ENCODE measurements at regions of chr3 and their contacts with region 1.

Region 1: GRCh38 chr3:354432-354831 is 157.9 kb downstream of the CHL1 start:
- DNase-seq: peak; percentile 60
- ATAC-seq: peak; percentile 87
- H3K4me3 ChIP-seq: no peak overlapping the region
- H3K27ac ChIP-seq: no peak overlapping the region
- H3K4me1 ChIP-seq: no peaks in the 10 kb centered on the region
- H3K27me3 ChIP-seq: no peaks in the 10 kb centered on the region
- CTCF ChIP-seq: peak; percentile 72 to 84 (median 76)
- EP300 ChIP-seq: no peak
- POLR2A ChIP-seq: no peak
- RAD21 ChIP-seq: peak; percentile 94

Region 2: GRCh38 chr3:54244-54643 is 300.2 kb before region 1 on chr3:
- CTCF ChIA-PET with region 1: interaction called, 415 read pairs
- POLR2A ChIA-PET with region 1: no interaction called
- RAD21 ChIA-PET with region 1: interaction called, 328 read pairs
- SMC1A ChIA-PET with region 1: interaction called, 68 read pairs
- in situ Hi-C with region 1: no loop called
- intact Hi-C with region 1: no loop called
- DNase-seq: no peak
- ATAC-seq: peak; percentile 72
- H3K4me3 ChIP-seq: no peak overlapping the region
- H3K27ac ChIP-seq: no peak overlapping the region
- H3K4me1 ChIP-seq: no peaks in the 10 kb centered on the region
- H3K27me3 ChIP-seq: no peaks in the 10 kb centered on the region
- CTCF ChIP-seq: peak in 1 of 3 experiments; percentile 4; a peak in 1 of 6 replicates
- EP300 ChIP-seq: no peak
- POLR2A ChIP-seq: no peak
- RAD21 ChIP-seq: no peak

Region 3: GRCh38 chr3:118666-119065 is 235.8 kb before region 1 on chr3:
- CTCF ChIA-PET with region 1: interaction called, 11 read pairs
- POLR2A ChIA-PET with region 1: no interaction called
- RAD21 ChIA-PET with region 1: interaction called, 11 read pairs
- SMC1A ChIA-PET with region 1: interaction called, 17 read pairs
- in situ Hi-C with region 1: no loop called
- intact Hi-C with region 1: no loop called
- DNase-seq: no peak
- ATAC-seq: no peak
- H3K4me3 ChIP-seq: no peak overlapping the region
- H3K27ac ChIP-seq: no peak overlapping the region
- H3K4me1 ChIP-seq: no peaks in the 10 kb centered on the region
- H3K27me3 ChIP-seq: no peaks in the 10 kb centered on the region
- CTCF ChIP-seq: no peak
- EP300 ChIP-seq: no peak
- POLR2A ChIP-seq: no peak
- RAD21 ChIP-seq: no peak

Region 4: GRCh38 chr3:184983-185382 is 169.4 kb before region 1 on chr3:
- CTCF ChIA-PET with region 1: interaction called, 15 read pairs
- POLR2A ChIA-PET with region 1: no interaction called
- RAD21 ChIA-PET with region 1: interaction called, 5 read pairs
- SMC1A ChIA-PET with region 1: interaction called, 15 read pairs
- in situ Hi-C with region 1: no loop called
- intact Hi-C with region 1: no loop called
- DNase-seq: no peak
- ATAC-seq: no peak
- H3K4me3 ChIP-seq: no peak overlapping the region
- H3K27ac ChIP-seq: no peak overlapping the region
- H3K4me1 ChIP-seq: no peaks in the 10 kb centered on the region
- H3K27me3 ChIP-seq: no peaks in the 10 kb centered on the region
- CTCF ChIP-seq: no peak
- EP300 ChIP-seq: no peak
- POLR2A ChIP-seq: no peak
- RAD21 ChIP-seq: no peak

Region 5: GRCh38 chr3:260911-261310 is 93.5 kb before region 1 on chr3:
- CTCF ChIA-PET with region 1: interaction called, 3 read pairs
- POLR2A ChIA-PET with region 1: no interaction called
- RAD21 ChIA-PET with region 1: interaction called, 12 read pairs
- SMC1A ChIA-PET with region 1: interaction called, 8 read pairs
- in situ Hi-C with region 1: no loop called
- intact Hi-C with region 1: no loop called
- DNase-seq: no peak
- ATAC-seq: no peak
- H3K4me3 ChIP-seq: no peak overlapping the region
- H3K27ac ChIP-seq: no peak overlapping the region
- H3K4me1 ChIP-seq: no peaks in the 10 kb centered on the region
- H3K27me3 ChIP-seq: no peaks in the 10 kb centered on the region
- CTCF ChIP-seq: no peak
- EP300 ChIP-seq: no peak
- POLR2A ChIP-seq: no peak
- RAD21 ChIP-seq: no peak

Region 6: DNA sequence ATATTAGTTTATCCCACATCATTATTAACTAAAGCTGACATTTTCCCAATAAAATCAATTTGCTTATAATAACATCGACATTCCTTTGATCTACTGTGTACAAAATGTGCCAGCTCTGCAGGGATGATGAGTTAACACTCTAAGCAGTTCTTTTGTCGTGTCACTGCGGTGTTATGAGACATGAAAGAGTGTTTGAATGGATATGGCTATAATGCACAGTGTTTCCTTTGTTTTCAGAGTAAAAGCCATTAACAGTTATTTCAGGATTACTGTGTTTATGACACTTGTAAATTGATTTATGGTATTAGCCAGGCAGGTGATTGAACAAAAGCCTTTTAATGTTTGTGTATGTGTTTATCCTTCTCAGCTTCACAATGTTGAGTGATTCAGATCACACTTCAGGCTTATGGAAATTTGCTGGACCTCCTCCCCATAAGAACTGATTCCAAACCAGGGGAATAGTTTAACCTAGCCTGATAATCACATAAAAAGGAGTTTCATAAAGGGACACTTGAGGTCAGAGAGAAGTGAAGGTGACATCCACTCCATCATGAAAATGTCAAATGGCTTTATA is 42.2 kb before region 1 on chr3:
- CTCF ChIA-PET with region 1: interaction called, 6 read pairs
- POLR2A ChIA-PET with region 1: no interaction called
- RAD21 ChIA-PET with region 1: interaction called, 9 read pairs
- SMC1A ChIA-PET with region 1: interaction called, 11 read pairs
- in situ Hi-C with region 1: no loop called
- intact Hi-C with region 1: no loop called
- DNase-seq: no peak
- ATAC-seq: no peak
- H3K4me3 ChIP-seq: no peak overlapping the region
- H3K27ac ChIP-seq: no peak overlapping the region
- H3K4me1 ChIP-seq: no peaks in the 10 kb centered on the region
- H3K27me3 ChIP-seq: no peaks in the 10 kb centered on the region
- CTCF ChIP-seq: no peak
- EP300 ChIP-seq: no peak
- POLR2A ChIP-seq: no peak
- RAD21 ChIP-seq: no peak

Region 7: DNA sequence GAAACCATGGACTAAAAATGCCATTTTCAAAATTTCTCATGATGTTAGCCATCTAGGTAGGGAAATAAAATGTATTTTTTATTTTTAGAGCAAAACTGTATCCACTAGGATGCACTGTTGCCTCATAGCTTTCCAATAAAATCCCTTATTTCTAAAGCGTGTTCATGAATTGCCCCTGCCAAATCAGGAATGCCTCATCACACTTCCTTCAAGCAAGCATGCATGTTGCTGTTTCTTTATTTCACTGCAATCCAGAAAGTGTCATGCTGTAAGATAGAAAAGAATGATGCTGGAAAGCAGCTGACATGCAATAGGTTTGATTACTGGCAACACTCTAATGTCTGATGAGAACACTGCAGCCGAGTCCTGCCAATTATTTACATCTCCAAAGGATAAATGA is 81.6 kb after region 1 on chr3:
- CTCF ChIA-PET with region 1: no interaction called
- POLR2A ChIA-PET with region 1: no interaction called
- RAD21 ChIA-PET with region 1: no interaction called
- SMC1A ChIA-PET with region 1: no interaction called
- in situ Hi-C with region 1: no loop called
- intact Hi-C with region 1: no loop called
- DNase-seq: no peak
- ATAC-seq: no peak
- H3K4me3 ChIP-seq: no peak overlapping the region
- H3K27ac ChIP-seq: no peak overlapping the region
- H3K4me1 ChIP-seq: no peaks in the 10 kb centered on the region
- H3K27me3 ChIP-seq: no peaks in the 10 kb centered on the region
- CTCF ChIP-seq: no peak
- EP300 ChIP-seq: no peak
- POLR2A ChIP-seq: no peak
- RAD21 ChIP-seq: no peak

Region 8: GRCh38 chr3:452221-452620 is 97.8 kb after region 1 on chr3:
- CTCF ChIA-PET with region 1: no interaction called
- POLR2A ChIA-PET with region 1: no interaction called
- RAD21 ChIA-PET with region 1: no interaction called
- SMC1A ChIA-PET with region 1: no interaction called
- in situ Hi-C with region 1: no loop called
- intact Hi-C with region 1: no loop called
- DNase-seq: no peak
- ATAC-seq: no peak
- H3K4me3 ChIP-seq: no peak overlapping the region
- H3K27ac ChIP-seq: no peak overlapping the region
- H3K4me1 ChIP-seq: no peaks in the 10 kb centered on the region
- H3K27me3 ChIP-seq: no peaks in the 10 kb centered on the region
- CTCF ChIP-seq: no peak
- EP300 ChIP-seq: no peak
- POLR2A ChIP-seq: no peak
- RAD21 ChIP-seq: no peak

Region 9: GRCh38 chr3:621714-622113 is 267.3 kb after region 1 on chr3:
- CTCF ChIA-PET with region 1: no interaction called
- POLR2A ChIA-PET with region 1: no interaction called
- RAD21 ChIA-PET with region 1: no interaction called
- SMC1A ChIA-PET with region 1: no interaction called
- in situ Hi-C with region 1: no loop called
- intact Hi-C with region 1: no loop called
- DNase-seq: no peak
- ATAC-seq: no peak
- H3K4me3 ChIP-seq: no peak overlapping the region
- H3K27ac ChIP-seq: no peak overlapping the region
- H3K4me1 ChIP-seq: no peaks in the 10 kb centered on the region
- H3K27me3 ChIP-seq: no peaks in the 10 kb centered on the region
- CTCF ChIP-seq: no peak
- EP300 ChIP-seq: no peak
- POLR2A ChIP-seq: no peak
- RAD21 ChIP-seq: no peak

Region 10: DNA sequence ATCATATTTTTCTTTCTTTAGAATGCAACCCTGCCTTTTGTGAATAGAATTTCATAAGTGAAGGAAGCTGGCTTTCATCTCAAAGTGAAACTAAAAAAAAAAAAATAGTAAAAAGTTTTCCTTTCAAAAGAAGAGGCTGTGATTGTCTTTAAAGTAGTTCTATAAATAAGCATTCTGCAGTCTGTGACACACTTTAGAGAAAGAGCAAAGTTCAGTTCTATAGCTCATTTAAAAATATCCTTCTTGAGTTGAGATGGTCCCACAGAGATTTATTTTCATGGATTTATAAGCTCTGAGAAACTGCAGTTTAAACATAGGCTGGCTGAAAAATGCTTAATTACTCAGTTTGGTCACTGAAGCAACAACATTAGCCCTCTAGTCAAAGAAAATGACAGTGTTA is 702.3 kb after region 1 on chr3:
- CTCF ChIA-PET with region 1: no interaction called
- POLR2A ChIA-PET with region 1: no interaction called
- RAD21 ChIA-PET with region 1: no interaction called
- SMC1A ChIA-PET with region 1: no interaction called
- in situ Hi-C with region 1: no loop called
- intact Hi-C with region 1: no loop called
- DNase-seq: no peak
- ATAC-seq: no peak
- H3K4me3 ChIP-seq: no peak overlapping the region
- H3K27ac ChIP-seq: no peak overlapping the region
- H3K4me1 ChIP-seq: no peaks in the 10 kb centered on the region
- H3K27me3 ChIP-seq: no peaks in the 10 kb centered on the region
- CTCF ChIP-seq: no peak
- EP300 ChIP-seq: no peak
- POLR2A ChIP-seq: no peak
- RAD21 ChIP-seq: no peak

Measured in GM12878 (cell line).